ENCODE measurements at regions of chr16 and their contacts with region 1.

Region 1: DNA sequence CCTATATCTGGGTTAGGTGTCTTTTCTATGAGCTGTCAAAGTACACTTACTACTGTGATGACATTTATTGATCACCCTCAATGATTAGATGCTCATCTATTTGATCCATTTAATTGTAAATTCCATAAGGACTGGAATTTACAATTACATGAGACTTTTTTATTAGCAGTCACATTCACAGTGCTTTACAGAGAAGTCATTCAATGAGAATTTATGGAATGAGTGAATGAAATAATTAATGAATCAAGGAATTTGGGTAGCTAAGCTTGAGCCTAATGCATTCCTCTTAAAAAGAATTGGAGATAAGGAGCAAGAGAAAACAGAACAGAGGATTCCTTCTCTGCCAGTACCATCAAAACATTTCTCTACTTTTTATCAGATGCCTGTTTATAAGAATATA is 1437.5 kb upstream of the CDH8 start:
- DNase-seq: no peak
- H3K4me3 ChIP-seq: no peak overlapping the region
- H3K27ac ChIP-seq: no peak overlapping the region
- H3K4me1 ChIP-seq: no peaks in the 10 kb centered on the region
- H3K27me3 ChIP-seq: no peaks in the 10 kb centered on the region
- CTCF ChIP-seq: no peak
- POLR2A ChIP-seq: no peak

Region 2: GRCh38 chr16:64455254-64455653 is 981.5 kb after region 1 on chr16:
- intact Hi-C with region 1: loop called (anchors 10 kb)
- DNase-seq: no peak
- H3K4me3 ChIP-seq: no peak overlapping the region
- H3K27ac ChIP-seq: no peak overlapping the region
- H3K4me1 ChIP-seq: no peaks in the 10 kb centered on the region
- H3K27me3 ChIP-seq: no peaks in the 10 kb centered on the region
- CTCF ChIP-seq: no peak
- POLR2A ChIP-seq: no peak